OCI-LY7 (cell line): ENCODE measurements at regions of chr15 and their contacts with region 1.

Region 1: DNA sequence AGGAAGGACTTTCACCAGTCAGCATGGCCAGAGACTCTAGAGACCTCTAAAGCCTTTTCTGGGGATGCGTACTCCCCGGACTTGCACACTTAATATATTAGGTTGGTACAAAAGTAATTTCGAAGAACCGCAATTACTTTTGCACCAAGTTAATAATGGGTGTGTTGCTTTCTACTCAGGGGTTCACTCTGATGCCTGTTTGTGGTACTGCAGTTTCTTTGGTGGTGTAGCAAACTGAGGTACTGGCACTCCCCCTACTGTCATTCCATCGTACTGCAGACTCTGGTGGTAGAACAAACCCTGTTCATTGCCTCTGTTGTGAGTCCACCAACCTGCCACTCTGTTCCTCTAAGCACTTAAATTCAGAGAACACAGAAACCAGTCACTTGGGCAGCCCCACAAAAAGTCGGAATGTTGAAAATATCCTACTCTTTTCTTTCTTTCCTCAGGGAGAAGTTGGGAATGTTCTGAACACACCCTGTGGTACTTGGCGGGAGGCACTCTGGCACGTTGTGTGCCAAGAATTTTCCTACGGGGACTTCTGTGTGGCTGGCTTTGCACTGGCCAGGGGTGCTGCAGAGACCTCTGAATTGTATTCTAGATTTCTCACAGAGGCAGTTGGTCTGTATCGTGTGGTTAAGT is 46.3 kb downstream of the GABRG3 start:
- DNase-seq: peak; percentile 62
- H3K4me3 ChIP-seq: no peak overlapping the region
- H3K27ac ChIP-seq: no peak overlapping the region
- H3K4me1 ChIP-seq: no peaks in the 10 kb centered on the region
- CTCF ChIP-seq: peak; percentile 88

Region 2: DNA sequence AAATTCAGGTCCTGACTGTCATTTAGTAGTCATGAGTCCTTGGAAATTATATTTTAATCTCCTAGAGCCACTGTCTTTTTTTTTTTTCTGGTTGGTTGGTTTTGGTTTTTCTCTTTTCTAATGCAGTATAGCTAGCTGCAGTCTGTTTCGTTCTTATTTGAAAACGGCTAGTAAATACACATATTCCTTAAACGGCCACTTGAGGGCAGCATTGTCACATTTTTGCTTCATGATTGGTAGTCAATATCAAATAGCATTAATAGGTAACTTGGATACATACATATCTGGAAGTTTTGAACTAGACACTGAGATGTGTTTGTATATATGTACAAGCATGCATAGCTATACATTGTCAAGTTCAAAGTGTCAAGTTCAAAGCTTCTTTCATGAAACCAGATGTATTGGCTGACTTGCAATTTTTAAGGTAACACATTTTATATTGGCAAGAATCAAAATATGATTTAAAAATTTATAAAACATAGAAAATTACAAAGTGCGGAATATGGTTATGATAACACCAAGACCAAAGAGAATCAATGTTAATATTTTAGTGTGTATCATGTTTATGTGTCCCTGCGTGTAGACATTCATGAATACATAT is 127.9 kb before region 1 on chr15:
- CTCF ChIA-PET with region 1: no interaction called
- POLR2A ChIA-PET with region 1: interaction called, 3 read pairs
- intact Hi-C with region 1: loop called (anchors 1 kb)
- DNase-seq: peak; percentile 67
- H3K4me3 ChIP-seq: no peak overlapping the region
- H3K27ac ChIP-seq: no peak overlapping the region
- H3K4me1 ChIP-seq: no peaks in the 10 kb centered on the region
- CTCF ChIP-seq: peak; percentile 93

Region 3: DNA sequence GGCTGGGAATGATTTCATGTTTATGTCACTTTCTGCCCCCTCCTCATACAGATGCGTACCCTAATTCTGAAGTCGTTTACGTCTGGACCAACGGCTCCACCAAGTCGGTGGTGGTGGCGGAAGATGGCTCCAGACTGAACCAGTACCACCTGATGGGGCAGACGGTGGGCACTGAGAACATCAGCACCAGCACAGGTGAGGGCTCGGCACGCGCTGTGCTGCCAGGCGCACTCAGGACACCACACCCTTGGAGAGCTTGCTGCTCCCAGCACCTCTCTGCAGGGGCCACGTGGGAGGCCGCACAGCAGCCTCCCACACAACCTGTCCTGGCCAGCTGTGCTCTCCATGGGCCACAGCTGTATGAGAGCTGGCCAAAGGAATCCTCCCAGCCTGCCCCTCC is 80.2 kb before region 1 on chr15:
- CTCF ChIA-PET with region 1: no interaction called
- POLR2A ChIA-PET with region 1: no interaction called
- intact Hi-C with region 1: no loop called
- DNase-seq: no peak
- H3K4me3 ChIP-seq: no peak overlapping the region
- H3K27ac ChIP-seq: no peak overlapping the region
- H3K4me1 ChIP-seq: no peaks in the 10 kb centered on the region
- CTCF ChIP-seq: no peak

Region 4: GRCh38 chr15:27059610-27060202 is 42.4 kb after region 1 on chr15:
- CTCF ChIA-PET with region 1: no interaction called
- POLR2A ChIA-PET with region 1: no interaction called
- intact Hi-C with region 1: no loop called
- DNase-seq: peak; percentile 44
- H3K4me3 ChIP-seq: no peak overlapping the region
- H3K27ac ChIP-seq: no peak overlapping the region
- H3K4me1 ChIP-seq: no peaks in the 10 kb centered on the region
- CTCF ChIP-seq: peak; percentile 85

Region 5: GRCh38 chr15:27070841-27071240 is 53.6 kb after region 1 on chr15:
- CTCF ChIA-PET with region 1: no interaction called
- POLR2A ChIA-PET with region 1: no interaction called
- intact Hi-C with region 1: no loop called
- DNase-seq: no peak
- H3K4me3 ChIP-seq: no peak overlapping the region
- H3K27ac ChIP-seq: no peak overlapping the region
- H3K4me1 ChIP-seq: no peaks in the 10 kb centered on the region
- CTCF ChIP-seq: no peak